Activated naive CD4-positive, alpha-beta T cell treated with anti-CD3 and anti-CD28 coated beads, Interleukin-2, amount 10 ng/mL, durations not matched to agents 7 days and 5 days (primary cell): ENCODE measurements at regions of chr17 and their contacts with region 1.

Region 1: GRCh38 chr17:27455914-27456680 is at the start of gene KSR1:
- DNase-seq: peak; percentile 89
- H3K4me3 Mint-ChIP-seq: peak within 1 kb of the TSS; percentile 82
- H3K27ac Mint-ChIP-seq: peak within 1 kb of the TSS; percentile 70
- H3K4me1 Mint-ChIP-seq: peaks cover 45% of the 10 kb centered on the region
- H3K27me3 Mint-ChIP-seq: peaks cover 32% of the 10 kb centered on the region

Region 2: DNA sequence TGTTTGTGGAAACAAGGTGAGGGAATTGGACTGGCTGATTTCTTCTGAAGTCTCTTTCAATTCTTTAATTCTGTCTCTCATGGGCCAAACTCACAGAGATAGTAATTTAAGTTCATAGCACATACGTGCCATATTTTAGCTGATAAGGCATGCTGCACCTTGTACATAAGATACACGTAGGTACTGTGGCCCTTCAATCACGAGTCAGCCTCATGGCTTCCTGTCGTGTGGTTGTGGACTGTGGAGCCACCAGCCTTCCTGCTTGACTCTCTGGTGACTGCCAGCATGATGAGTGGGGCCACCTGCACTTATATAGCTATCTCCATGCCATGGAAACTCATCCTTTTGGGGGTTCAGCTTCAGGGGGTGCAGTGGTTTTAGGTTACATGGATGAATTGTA is 25.2 kb after region 1 on chr17:
- CTCF ChIA-PET with region 1: interaction called, 10 read pairs
- DNase-seq: peak; percentile 82
- H3K4me3 Mint-ChIP-seq: no peak overlapping the region
- H3K27ac Mint-ChIP-seq: peak overlapping the region; percentile 93
- H3K4me1 Mint-ChIP-seq: peaks cover 76% of the 10 kb centered on the region
- H3K27me3 Mint-ChIP-seq: no peaks in the 10 kb centered on the region